ENCODE measurements at regions of chr19 and their contacts with region 1.

Region 1: GRCh38 chr19:16185123-16185767 is at the start of gene FAM32A:
- DNase-seq: peak; percentile 91 to 99 (median 99)
- ATAC-seq: peak; percentile 96
- H3K4me3 ChIP-seq: peak within 1 kb of the TSS; percentile 97
- H3K4me3 Mint-ChIP-seq: peak within 1 kb of the TSS; percentile 90 to 100 (median 99)
- H3K27ac ChIP-seq: peak within 1 kb of the TSS; percentile 87
- H3K27ac Mint-ChIP-seq: peak within 1 kb of the TSS; percentile 94 to 100 (median 96)
- H3K4me1 ChIP-seq: peaks cover 13 to 16% of the 10 kb centered on the region in 2 donors
- H3K4me1 Mint-ChIP-seq: peaks cover 9 to 46% (median 36%) of the 10 kb centered on the region in 7 donors
- H3K27me3 ChIP-seq: peaks cover 0 to 4% of the 10 kb centered on the region in 2 donors
- H3K27me3 Mint-ChIP-seq: peaks cover 0 to 2% (median 0%) of the 10 kb centered on the region in 5 donors
- total RNA-seq, gene FAM32A: 45.9 to 69.4 (median 65.9) TPM

Region 2: DNA sequence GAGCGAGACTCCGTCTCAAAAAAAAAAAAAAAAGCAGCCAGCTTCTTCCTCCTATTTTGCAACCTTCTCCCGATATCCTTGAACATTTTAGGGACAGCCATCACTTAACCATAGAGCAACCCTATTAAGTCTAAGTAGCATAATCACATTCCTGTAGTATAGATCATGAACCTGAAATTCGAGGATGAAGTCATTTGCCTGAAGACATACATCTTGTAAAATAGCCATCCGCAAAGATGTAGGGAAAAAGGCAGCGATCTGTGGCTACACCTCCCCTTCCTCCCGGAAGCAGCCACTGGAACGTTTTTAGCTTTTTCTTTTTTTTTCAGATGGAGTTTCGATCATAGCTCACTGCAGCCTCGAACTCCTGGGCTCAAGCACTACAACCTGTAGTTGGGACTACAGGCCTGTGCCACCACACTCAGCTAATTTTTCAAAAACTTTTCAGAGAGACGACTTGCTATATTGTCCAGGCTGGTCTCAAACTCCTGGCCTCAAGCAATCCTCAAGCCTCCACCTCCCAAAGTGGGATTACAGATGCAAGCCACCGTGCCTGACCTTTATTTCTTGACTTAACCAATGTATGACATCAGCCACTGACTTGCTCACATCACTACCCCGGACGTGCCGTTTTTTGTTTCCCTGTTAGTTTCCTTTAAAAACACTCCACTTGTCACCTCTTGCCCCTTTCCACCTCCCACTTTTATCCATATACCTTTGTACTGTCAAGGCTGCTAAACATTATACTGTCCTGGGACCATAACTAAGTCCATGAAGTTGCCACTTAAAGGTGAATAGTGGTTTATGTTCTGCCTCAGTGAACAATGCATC is 951.0 kb before region 1 on chr19:
- CTCF ChIA-PET with region 1: no interaction called
- POLR2A ChIA-PET with region 1: no interaction called
- intact Hi-C with region 1: no loop called
- DNase-seq: no peak
- ATAC-seq: no peak
- H3K4me3 ChIP-seq: no peak overlapping the region
- H3K4me3 Mint-ChIP-seq: peak overlapping the region in 6 of 10 donors; percentile 22 to 80 (median 68)
- H3K27ac ChIP-seq: no peak overlapping the region
- H3K27ac Mint-ChIP-seq: no peak overlapping the region
- H3K4me1 ChIP-seq: peaks cover 0 to 5% of the 10 kb centered on the region in 2 donors
- H3K4me1 Mint-ChIP-seq: peaks cover 6 to 21% (median 16%) of the 10 kb centered on the region in 7 donors
- H3K27me3 ChIP-seq: peaks cover 0 to 5% of the 10 kb centered on the region in 2 donors
- H3K27me3 Mint-ChIP-seq: peaks cover 18 to 40% (median 25%) of the 10 kb centered on the region in 5 donors

Region 3: GRCh38 chr19:15584541-15585115 is 600.6 kb before region 1 on chr19:
- CTCF ChIA-PET with region 1: interaction called, 3 read pairs
- POLR2A ChIA-PET with region 1: no interaction called
- intact Hi-C with region 1: loop called in 1 of 2 experiments (anchors 1 kb)
- DNase-seq: peak; percentile 61 to 86 (median 78)
- ATAC-seq: peak; percentile 94
- H3K4me3 ChIP-seq: peak overlapping the region; percentile 35
- H3K4me3 Mint-ChIP-seq: peak overlapping the region in 8 of 10 donors; percentile 14 to 70 (median 49)
- H3K27ac ChIP-seq: no peak overlapping the region
- H3K27ac Mint-ChIP-seq: peak overlapping the region in 1 of 9 donors; percentile 14
- H3K4me1 ChIP-seq: no peaks in the 10 kb centered on the region
- H3K4me1 Mint-ChIP-seq: peaks cover 0 to 8% (median 4%) of the 10 kb centered on the region in 7 donors
- H3K27me3 ChIP-seq: peaks cover 3 to 10% of the 10 kb centered on the region in 2 donors
- H3K27me3 Mint-ChIP-seq: peaks cover 5 to 16% (median 13%) of the 10 kb centered on the region in 5 donors

Region 4: DNA sequence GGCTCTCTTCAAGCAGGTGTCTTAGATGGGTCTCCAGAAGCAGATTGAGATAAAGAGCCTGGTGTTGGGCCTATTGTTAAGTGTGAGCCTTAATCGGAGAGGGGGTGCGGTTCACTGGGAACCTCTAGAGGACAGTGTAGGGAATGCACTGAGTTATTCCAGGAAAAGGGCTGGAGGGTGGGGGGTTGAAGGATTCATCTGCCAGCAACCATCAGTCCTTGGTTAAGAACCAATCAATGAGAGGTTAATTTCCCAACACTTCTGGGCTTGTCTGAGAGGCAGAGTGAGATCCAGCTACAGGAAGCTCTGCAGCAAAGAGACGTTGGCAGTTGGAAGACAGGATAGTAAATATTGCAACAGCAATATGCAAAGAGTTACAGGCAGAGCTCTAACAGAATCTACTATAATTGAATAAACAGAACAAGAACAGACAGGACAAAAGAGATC is 316.1 kb before region 1 on chr19:
- CTCF ChIA-PET with region 1: no interaction called
- POLR2A ChIA-PET with region 1: no interaction called
- intact Hi-C with region 1: loop called in 1 of 2 experiments (anchors 1 kb)
- DNase-seq: peak in 7 of 9 donors; percentile 24 to 55 (median 45)
- ATAC-seq: peak; percentile 89
- H3K4me3 ChIP-seq: no peak overlapping the region
- H3K4me3 Mint-ChIP-seq: no peak overlapping the region
- H3K27ac ChIP-seq: no peak overlapping the region
- H3K27ac Mint-ChIP-seq: peak overlapping the region in 2 of 9 donors; percentile 0 to 12
- H3K4me1 ChIP-seq: peaks cover 4 to 5% of the 10 kb centered on the region in 2 donors
- H3K4me1 Mint-ChIP-seq: peaks cover 5 to 20% (median 12%) of the 10 kb centered on the region in 7 donors
- H3K27me3 ChIP-seq: no peaks in the 10 kb centered on the region
- H3K27me3 Mint-ChIP-seq: peaks cover 6 to 13% (median 9%) of the 10 kb centered on the region in 5 donors

Region 5: DNA sequence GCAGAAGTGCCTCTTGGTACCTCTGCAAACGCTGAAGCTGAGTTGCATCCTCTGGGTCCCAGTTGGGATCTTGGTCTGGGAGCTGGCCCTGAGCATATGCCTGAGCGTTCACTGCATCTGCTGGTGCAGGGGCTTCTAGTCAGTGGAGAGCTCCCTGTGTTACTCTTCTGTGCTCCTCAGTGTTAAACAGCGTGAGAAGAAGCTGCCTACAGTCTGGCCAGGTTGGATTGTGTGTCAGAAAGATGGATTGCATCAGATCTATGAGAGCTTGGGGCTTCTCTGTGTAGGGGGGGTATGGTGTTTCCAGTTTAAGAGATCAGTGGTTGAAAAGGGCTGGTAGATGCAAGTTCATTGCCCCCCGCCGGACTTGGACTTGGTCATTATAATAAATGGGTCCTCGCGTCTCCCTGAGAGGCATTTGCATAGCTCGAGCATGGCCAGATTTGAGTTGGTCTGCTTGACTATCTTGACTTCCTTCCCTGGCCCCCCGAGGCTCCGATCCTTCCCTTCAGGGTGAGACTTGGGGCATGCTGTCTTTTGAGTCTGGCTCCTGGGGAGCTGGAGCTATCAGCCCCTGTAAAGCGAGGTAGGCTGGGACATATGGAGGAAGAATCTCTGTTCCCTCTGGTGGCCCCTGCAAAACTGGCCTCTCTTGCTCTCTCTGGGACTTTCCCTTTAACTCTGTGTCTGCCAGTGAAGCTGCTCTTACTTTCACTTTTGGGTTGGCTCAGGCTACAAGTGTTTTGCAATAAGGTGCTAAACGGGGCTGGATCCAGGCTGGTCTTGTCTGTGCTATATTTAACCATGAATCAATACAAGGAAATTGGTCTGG is 183.5 kb before region 1 on chr19:
- CTCF ChIA-PET with region 1: no interaction called
- POLR2A ChIA-PET with region 1: no interaction called
- intact Hi-C with region 1: no loop called
- DNase-seq: peak in 7 of 9 donors; percentile 13 to 57 (median 36)
- ATAC-seq: peak; percentile 90
- H3K4me3 ChIP-seq: peak overlapping the region; percentile 54
- H3K4me3 Mint-ChIP-seq: peak overlapping the region; percentile 80 to 92 (median 87)
- H3K27ac ChIP-seq: peak overlapping the region; percentile 63
- H3K27ac Mint-ChIP-seq: peak overlapping the region; percentile 84 to 94 (median 87)
- H3K4me1 ChIP-seq: peaks cover 8 to 9% of the 10 kb centered on the region in 2 donors
- H3K4me1 Mint-ChIP-seq: peaks cover 23 to 28% (median 26%) of the 10 kb centered on the region in 7 donors
- H3K27me3 ChIP-seq: no peaks in the 10 kb centered on the region
- H3K27me3 Mint-ChIP-seq: no peaks in the 10 kb centered on the region

Region 6: GRCh38 chr19:16070366-16070990 is 114.8 kb before region 1 on chr19:
- CTCF ChIA-PET with region 1: interaction called, 5 read pairs
- POLR2A ChIA-PET with region 1: interaction called, 6 read pairs
- intact Hi-C with region 1: loop called (anchors 1 kb)
- DNase-seq: peak; percentile 53 to 95 (median 90)
- ATAC-seq: peak; percentile 93
- H3K4me3 ChIP-seq: peak overlapping the region; percentile 56
- H3K4me3 Mint-ChIP-seq: peak overlapping the region in 4 of 10 donors; percentile 65 to 81 (median 68)
- H3K27ac ChIP-seq: peak overlapping the region; percentile 89
- H3K27ac Mint-ChIP-seq: no peak overlapping the region
- H3K4me1 ChIP-seq: peaks cover 22 to 61% of the 10 kb centered on the region in 2 donors
- H3K4me1 Mint-ChIP-seq: peaks cover 31 to 50% (median 42%) of the 10 kb centered on the region in 7 donors
- H3K27me3 ChIP-seq: no peaks in the 10 kb centered on the region
- H3K27me3 Mint-ChIP-seq: no peaks in the 10 kb centered on the region

Region 7: GRCh38 chr19:16216744-16217670 is 31.8 kb after region 1 on chr19:
- CTCF ChIA-PET with region 1: interaction called, 3 read pairs
- POLR2A ChIA-PET with region 1: interaction called, 8 read pairs
- intact Hi-C with region 1: loop called in 1 of 2 experiments (anchors 1 kb)
- DNase-seq: peak in 7 of 9 donors; percentile 36 to 55 (median 50)
- ATAC-seq: peak; percentile 76
- H3K4me3 ChIP-seq: peak overlapping the region; percentile 34
- H3K4me3 Mint-ChIP-seq: peak overlapping the region; percentile 33 to 85 (median 78)
- H3K27ac ChIP-seq: peak overlapping the region; percentile 57
- H3K27ac Mint-ChIP-seq: peak overlapping the region; percentile 52 to 97 (median 92)
- H3K4me1 ChIP-seq: peaks cover 0 to 44% of the 10 kb centered on the region in 2 donors
- H3K4me1 Mint-ChIP-seq: peaks cover 29 to 68% (median 56%) of the 10 kb centered on the region in 7 donors
- H3K27me3 ChIP-seq: no peaks in the 10 kb centered on the region
- H3K27me3 Mint-ChIP-seq: no peaks in the 10 kb centered on the region

Region 8: DNA sequence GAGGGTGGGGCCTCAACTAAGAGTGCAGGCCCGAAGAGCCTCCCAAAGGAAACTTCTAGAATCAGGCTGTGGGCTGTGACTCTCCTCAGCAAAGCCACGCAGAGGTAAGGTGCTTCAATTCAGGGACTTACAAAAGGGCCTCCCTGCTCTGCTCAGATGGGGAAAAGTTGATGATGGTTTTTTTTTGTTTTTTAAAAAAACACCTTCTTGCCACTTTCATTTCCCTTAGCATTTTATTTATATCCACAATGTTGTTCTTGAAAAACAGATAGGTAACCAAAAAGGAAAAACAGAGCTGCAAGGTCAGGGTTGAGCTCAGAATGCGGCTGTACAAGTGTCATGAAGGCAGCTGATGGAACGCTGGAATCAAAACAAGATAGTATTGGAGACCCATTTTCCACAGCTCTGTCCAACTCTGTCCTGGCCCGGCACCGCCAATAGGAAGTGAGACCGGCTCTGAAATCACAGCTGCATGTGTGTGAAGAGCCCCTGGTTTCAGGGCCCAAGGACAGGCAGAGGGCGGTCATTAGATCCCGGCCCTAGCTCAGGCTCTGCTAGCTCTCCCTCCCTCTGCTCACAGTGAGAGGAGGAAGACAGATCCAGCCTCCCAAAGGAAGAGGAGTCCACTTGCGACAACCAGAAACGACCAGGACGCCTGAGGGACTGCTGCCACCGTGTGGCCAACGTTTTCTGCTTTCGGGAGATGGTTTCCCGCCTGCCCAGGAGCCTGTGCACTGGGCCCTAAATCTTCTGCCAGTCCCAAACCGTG is 197.7 kb after region 1 on chr19:
- CTCF ChIA-PET with region 1: interaction called, 8 read pairs
- POLR2A ChIA-PET with region 1: interaction called, 16 read pairs
- intact Hi-C with region 1: loop called in 1 of 2 experiments (anchors 1 kb)
- DNase-seq: peak; percentile 63 to 81 (median 75)
- ATAC-seq: peak; percentile 82
- H3K4me3 ChIP-seq: peak overlapping the region; percentile 44
- H3K4me3 Mint-ChIP-seq: peak overlapping the region; percentile 61 to 84 (median 70)
- H3K27ac ChIP-seq: peak overlapping the region; percentile 84
- H3K27ac Mint-ChIP-seq: peak overlapping the region in 7 of 9 donors; percentile 87 to 98 (median 97)
- H3K4me1 ChIP-seq: peaks cover 37 to 53% of the 10 kb centered on the region in 2 donors
- H3K4me1 Mint-ChIP-seq: peaks cover 36 to 81% (median 63%) of the 10 kb centered on the region in 7 donors
- H3K27me3 ChIP-seq: no peaks in the 10 kb centered on the region
- H3K27me3 Mint-ChIP-seq: no peaks in the 10 kb centered on the region

Measured in naive thymus-derived CD4-positive, alpha-beta T cell (primary cell).